ENCODE measurements at regions of chr2 and their contacts with region 1.

Region 1: DNA sequence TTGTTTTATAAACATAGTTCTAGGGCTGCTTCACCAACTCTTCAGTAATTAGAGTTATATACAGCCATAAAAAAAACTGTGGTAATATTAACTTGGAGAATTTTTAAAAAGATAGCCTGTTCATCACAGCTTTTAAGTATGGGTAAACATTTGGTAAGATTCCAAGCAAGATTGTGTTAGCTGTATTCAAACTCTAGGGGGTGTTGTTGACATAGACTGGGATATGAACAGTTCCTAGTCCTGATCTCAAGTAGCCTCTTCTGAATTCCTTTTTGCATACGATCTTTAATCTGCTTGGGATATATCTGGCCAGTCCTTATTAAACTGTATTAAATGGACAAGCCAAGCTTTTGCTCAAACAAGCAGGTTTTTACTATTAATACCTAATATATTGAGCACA is 13.4 kb downstream of the NOP58 start:
- DNase-seq: no peak
- H3K4me3 ChIP-seq: no peak overlapping the region
- H3K27ac ChIP-seq: no peak overlapping the region
- H3K27me3 ChIP-seq: no peaks in the 10 kb centered on the region
- CTCF ChIP-seq: peak; percentile 75

Region 2: GRCh38 chr2:202249521-202249850 is 29.5 kb before region 1 on chr2:
- CTCF ChIA-PET with region 1: no interaction called
- POLR2A ChIA-PET with region 1: no interaction called
- DNase-seq: no peak
- H3K4me3 ChIP-seq: no peak overlapping the region
- H3K27ac ChIP-seq: no peak overlapping the region
- H3K27me3 ChIP-seq: no peaks in the 10 kb centered on the region
- CTCF ChIP-seq: no peak

Region 3: DNA sequence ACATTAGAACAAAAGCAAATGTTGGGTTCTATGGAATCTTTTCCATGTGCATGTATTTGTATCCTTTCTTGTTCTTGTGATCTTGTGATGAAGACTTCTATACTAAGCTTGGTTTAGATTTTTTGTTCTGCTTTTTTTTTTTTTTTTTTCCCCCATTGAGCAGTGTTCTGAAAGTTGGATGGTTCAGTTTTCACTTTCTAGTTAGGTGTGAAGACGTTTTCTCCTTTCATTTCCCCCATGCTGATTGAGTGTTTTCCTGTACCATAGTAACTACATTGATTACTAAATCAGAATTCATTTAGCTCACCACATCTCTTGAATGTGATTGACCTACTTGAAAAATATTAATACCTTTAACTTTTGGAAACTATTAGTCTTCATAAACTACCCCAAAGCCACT is 20.8 kb after region 1 on chr2:
- CTCF ChIA-PET with region 1: interaction called, 12 read pairs
- POLR2A ChIA-PET with region 1: no interaction called
- DNase-seq: no peak
- H3K4me3 ChIP-seq: no peak overlapping the region
- H3K27ac ChIP-seq: no peak overlapping the region
- H3K27me3 ChIP-seq: no peaks in the 10 kb centered on the region
- CTCF ChIP-seq: no peak

Measured in AG04450 (cell line).